ENCODE measurements at regions of chr9 and their contacts with region 1.

Region 1: GRCh38 chr9:129282272-129283211 is 104.5 kb upstream of the IER5L start:
- DNase-seq: peak; percentile 20
- H3K4me3 ChIP-seq: no peak overlapping the region
- H3K27ac ChIP-seq: no peak overlapping the region
- H3K4me1 ChIP-seq: no peaks in the 10 kb centered on the region
- H3K27me3 ChIP-seq: no peaks in the 10 kb centered on the region
- CTCF ChIP-seq: no peak
- POLR2A ChIP-seq: no peak

Region 2: GRCh38 chr9:128999576-129000226 is 282.8 kb before region 1 on chr9:
- CTCF ChIA-PET with region 1: no interaction called
- POLR2A ChIA-PET with region 1: no interaction called
- dilution Hi-C with region 1: no loop called
- intact Hi-C with region 1: no loop called
- DNase-seq: no peak
- H3K4me3 ChIP-seq: no peak overlapping the region
- H3K27ac ChIP-seq: no peak overlapping the region
- H3K4me1 ChIP-seq: no peaks in the 10 kb centered on the region
- H3K27me3 ChIP-seq: no peaks in the 10 kb centered on the region
- CTCF ChIP-seq: no peak
- POLR2A ChIP-seq: no peak

Region 3: GRCh38 chr9:129270903-129271431 is 11.6 kb before region 1 on chr9:
- CTCF ChIA-PET with region 1: no interaction called
- POLR2A ChIA-PET with region 1: no interaction called
- dilution Hi-C with region 1: no loop called
- intact Hi-C with region 1: loop called (anchors 1 kb)
- DNase-seq: no peak
- H3K4me3 ChIP-seq: no peak overlapping the region
- H3K27ac ChIP-seq: no peak overlapping the region
- H3K4me1 ChIP-seq: no peaks in the 10 kb centered on the region
- H3K27me3 ChIP-seq: peaks cover 2 to 6% of the 10 kb centered on the region in 2 experiments
- CTCF ChIP-seq: no peak
- POLR2A ChIP-seq: no peak

Region 4: GRCh38 chr9:129412814-129413536 is 130.4 kb after region 1 on chr9:
- CTCF ChIA-PET with region 1: no interaction called
- POLR2A ChIA-PET with region 1: no interaction called
- dilution Hi-C with region 1: no loop called
- intact Hi-C with region 1: no loop called
- DNase-seq: peak; percentile 81
- H3K4me3 ChIP-seq: peak overlapping the region in 1 of 3 experiments; percentile 31
- H3K27ac ChIP-seq: peak overlapping the region; percentile 96
- H3K4me1 ChIP-seq: peaks cover 15% of the 10 kb centered on the region
- H3K27me3 ChIP-seq: no peaks in the 10 kb centered on the region
- CTCF ChIP-seq: no peak
- POLR2A ChIP-seq: no peak